Posterior cingulate gyrus (tissue), 11 donors: ENCODE measurements at regions of chr3 and their contacts with region 1.

Region 1: GRCh38 chr3:131142580-131142979 is 115.9 kb downstream of the NEK11 start:
- DNase-seq: no peak

Region 2: DNA sequence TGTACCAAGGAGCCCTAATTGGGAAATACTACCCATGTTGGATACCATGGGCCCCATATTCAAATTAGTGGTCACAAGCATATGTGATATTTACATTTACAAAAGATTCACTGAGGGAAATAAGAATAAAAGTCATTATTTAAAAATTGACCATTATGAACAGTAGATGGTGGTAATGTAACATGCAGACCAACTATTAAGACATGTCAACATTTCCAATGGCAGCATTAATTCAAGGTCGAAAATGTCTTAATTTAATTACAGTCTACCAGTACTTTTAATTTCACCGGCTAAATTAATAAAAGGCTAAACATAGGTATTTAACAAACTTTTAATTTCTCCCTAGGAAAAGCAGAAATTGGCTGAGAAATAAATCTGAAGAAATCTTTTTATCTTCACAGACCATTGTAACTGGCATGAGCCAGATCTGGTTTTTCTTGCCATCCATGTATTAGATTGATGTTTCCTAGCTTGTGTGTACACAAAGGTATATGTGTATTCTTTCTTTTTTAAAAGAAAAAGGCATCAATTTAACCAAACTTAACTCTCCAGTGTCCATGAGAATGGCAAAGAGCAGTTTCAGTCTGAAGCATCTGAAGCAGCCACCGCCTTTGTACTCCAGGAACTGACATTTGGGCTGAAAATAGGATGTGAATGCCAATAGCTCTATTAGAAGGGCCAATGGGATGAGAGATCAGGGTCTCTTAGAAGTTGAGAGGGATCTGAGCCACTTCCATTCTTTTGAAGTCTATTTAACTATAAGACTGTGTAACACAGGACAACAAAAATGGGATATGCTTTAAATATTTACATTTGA is 89.3 kb before region 1 on chr3:
- intact Hi-C with region 1: loop called (anchors 1 kb)
- DNase-seq: no peak

Region 3: GRCh38 chr3:131082871-131083863 is 59.4 kb before region 1 on chr3:
- intact Hi-C with region 1: loop called (anchors 10 kb)
- DNase-seq: peak; percentile 89 to 100 (median 96)